ENCODE measurements at regions of chr1 and their contacts with region 1.

Region 1: DNA sequence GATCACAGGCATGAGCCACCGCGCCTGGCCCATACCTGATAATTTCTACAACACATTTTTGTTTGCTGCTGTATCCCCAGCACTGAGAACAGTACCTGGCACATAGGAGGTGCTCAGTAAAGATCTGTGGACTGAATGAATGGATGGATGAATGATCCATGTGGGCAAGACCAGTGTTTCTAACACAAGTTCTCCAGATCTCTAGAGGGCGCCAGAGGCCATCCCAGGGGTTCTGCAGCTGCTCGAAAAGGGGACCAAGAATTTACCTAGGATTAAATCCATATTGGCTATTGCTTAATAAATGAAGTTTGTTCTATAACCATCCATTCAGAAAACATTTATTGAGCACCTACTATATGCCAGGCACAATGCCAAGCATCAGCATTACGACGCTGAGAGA is 167.7 kb downstream of the ACTL8 start:
- DNase-seq: peak; percentile 40
- ATAC-seq: no peak

Region 2: DNA sequence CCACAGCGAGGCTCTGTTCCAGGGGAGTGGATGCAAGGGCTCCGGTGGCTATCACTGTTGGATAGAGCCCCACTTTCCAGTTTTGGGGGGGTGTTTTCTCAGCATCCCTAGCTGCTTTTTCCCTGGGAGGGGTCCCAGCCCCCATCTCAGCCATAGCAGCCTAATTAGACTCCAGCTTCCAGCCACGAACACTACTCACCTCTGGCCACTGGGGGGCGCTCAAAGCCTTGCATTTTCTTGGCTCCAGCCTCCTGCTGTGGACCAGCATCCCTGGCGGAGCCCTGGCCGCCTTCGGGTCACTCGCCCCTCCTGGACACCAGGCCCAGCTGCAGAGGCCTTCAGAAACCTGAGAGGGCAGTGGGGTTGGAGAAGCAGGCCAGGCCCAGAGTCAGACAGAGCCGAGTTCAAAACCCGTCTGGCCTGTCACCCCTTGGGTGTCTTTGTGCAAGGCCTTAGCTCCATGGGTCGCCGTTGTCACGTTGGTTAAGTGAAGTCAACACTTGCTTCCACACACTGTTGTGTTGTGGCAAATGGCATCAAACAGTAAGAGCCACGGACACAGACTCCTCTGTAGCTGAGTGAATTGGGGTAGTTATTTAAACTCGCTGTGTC is 261.2 kb before region 1 on chr1:
- intact Hi-C with region 1: loop called in 1 of 2 experiments (anchors 10 kb)
- DNase-seq: peak; percentile 52
- ATAC-seq: peak; percentile 18 to 58

Region 3: DNA sequence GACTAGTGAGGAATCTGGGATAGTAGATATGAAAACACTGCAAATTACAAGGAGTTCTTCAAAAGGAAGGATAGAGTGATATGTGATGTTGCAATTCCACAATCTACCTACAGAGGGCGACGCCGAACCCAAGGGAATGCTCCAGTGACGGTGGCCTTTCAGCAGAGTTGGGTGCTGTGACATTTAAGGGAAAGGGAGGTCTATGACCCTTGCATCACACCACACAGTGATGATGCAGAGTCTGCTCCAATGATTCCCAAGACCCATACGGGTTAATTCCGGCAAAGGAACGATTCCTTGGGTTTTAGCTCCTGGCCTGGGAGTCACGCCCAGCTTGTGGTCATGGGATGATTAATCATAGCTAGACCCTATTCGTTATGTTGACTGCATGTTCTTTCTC is 61.8 kb after region 1 on chr1:
- intact Hi-C with region 1: loop called in 1 of 2 experiments (anchors 10 kb)
- DNase-seq: no peak
- ATAC-seq: no peak

Region 4: DNA sequence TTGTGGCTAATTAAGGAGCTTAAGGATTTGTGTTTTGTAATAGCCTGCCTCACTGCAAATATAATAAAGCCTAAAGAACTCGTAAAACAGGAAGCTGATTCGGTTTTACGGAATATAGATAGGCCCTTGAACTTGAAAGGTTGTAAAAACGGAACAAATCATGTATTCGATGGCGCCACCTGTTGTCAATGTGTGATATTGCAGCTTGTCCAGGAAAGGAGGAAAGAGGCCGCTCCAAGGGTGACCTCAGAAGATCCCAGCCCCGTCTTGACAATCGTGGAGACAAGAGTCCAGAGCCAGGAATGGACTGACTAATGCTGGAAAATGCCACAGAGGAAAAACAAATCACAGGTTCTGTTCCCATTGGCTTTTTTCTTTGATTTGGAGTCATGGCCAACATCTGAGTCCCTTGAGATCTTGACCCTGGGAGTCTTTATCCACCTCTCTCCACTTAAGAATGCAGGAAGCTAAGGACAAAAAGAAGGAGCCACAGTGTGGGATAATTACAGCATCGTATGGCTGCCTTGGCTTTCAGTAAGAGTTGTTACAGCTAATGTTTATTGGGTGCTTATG is 177.7 kb after region 1 on chr1:
- intact Hi-C with region 1: loop called (anchors 2 to 10 kb)
- DNase-seq: peak; percentile 63
- ATAC-seq: peak; percentile 55 to 79

Region 5: DNA sequence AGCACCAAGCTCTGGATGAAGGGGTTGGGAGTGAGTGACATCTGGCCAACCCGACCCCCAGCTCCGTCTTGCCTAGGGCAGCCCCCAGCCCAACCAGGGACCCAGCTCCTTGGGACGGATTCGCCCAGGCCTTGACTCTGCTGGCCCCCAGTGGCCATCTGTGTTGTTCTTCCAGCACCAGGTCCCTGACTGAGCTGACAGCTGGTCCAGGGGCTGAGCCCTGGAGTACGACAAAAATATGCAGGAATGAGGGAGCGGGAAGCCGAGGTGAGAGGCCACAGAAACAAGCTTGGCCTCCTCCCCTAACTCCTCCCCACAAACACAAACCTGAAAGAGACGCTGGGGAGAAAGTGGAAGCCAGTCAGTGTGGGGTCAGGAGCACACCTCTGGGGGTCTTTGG is 652.8 kb after region 1 on chr1:
- intact Hi-C with region 1: loop called in 1 of 2 experiments (anchors 10 kb)
- DNase-seq: no peak
- ATAC-seq: peak in 1 of 2 donors; percentile 71